ENCODE measurements at regions of chr5 and their contacts with region 1.

Region 1: DNA sequence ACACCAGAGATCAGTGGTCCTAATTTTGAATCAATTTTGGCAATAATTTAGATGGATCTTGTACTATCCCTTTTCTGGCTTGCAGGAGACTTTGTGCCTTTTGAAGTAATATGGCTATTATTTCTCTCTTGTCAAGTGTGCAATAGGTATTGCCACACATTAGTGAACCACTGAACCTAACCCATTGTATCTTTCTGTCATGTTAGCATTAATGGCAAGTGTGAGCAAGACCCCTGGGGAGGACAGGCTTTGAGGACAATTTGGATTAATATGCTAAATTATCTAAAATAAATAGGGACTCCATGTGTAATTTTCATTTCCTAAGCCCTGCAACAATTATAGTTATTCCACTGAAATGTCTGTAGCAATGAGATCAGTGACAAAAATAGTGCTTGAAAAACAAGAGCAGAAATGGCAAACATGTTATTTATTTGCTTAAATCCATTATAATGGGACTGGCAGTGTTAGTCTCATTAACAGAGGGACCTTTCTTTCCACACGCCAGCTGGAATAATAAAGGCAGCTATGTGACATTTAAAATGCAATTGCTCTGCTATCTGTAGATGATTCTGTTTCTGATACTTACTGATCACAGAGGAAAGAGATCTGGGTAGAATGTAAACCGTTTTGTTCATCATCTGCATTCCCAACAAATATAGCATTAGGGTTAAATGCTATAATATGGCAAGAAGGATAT is 753.3 kb upstream of the ZNF608 start:
- DNase-seq: no peak
- ATAC-seq: peak; percentile 63

Region 2: DNA sequence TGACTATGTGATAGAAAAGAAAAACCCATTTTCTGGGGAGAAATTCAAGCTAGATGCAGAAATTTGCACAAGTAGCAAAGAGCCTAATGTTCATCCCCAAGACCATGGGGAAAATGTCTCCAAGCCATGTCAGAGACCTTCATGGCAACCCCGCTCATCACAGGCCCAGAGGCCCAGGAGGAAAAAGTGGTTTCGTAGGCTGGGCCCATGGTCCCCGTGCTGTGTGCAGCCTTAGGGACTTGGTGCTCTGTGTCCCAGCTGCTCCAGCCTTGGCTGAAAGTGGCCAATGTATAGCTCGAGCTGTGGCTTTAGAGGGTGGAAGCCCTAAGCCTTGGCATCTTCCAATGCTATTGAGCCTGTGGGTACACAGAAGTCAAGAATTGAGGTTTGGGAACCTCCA is 42.2 kb before region 1 on chr5:
- intact Hi-C with region 1: loop called (anchors 2 kb)
- DNase-seq: no peak
- ATAC-seq: no peak

Region 3: DNA sequence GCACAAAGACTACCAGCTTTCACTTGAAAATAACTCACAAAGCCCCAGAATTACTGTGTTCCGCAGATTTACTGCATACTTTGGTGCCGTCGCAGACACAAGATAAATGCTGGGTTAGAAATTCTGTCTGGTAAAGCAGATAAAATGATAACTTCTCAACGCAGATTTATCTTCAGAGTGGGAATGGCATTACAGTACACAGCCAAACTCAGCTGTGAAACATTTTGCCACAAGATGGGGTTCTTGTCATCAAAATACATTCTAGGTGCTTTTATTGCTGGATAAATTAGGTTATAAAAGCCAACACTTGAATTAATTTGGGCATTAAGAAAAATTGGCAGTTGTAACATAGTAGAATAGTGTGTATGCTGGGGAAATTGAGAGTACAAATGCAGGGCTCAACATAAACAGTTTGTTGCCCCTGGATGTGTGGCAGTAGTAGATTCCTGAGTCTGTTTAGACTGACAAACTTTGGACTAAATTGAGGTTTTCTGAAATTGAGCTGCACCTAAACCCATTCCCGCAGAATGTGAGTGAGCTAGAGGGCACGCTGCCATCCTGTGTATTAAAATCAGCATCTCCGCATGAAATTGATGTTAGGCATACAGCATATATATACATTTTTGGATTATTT is 1338.2 kb after region 1 on chr5:
- intact Hi-C with region 1: no loop called
- DNase-seq: no peak
- ATAC-seq: no peak

Measured in sciatic nerve (tissue), 2 donors.